CD4-positive, alpha-beta memory T cell (primary cell): ENCODE measurements at regions of chr3 and their contacts with region 1.

Region 1: DNA sequence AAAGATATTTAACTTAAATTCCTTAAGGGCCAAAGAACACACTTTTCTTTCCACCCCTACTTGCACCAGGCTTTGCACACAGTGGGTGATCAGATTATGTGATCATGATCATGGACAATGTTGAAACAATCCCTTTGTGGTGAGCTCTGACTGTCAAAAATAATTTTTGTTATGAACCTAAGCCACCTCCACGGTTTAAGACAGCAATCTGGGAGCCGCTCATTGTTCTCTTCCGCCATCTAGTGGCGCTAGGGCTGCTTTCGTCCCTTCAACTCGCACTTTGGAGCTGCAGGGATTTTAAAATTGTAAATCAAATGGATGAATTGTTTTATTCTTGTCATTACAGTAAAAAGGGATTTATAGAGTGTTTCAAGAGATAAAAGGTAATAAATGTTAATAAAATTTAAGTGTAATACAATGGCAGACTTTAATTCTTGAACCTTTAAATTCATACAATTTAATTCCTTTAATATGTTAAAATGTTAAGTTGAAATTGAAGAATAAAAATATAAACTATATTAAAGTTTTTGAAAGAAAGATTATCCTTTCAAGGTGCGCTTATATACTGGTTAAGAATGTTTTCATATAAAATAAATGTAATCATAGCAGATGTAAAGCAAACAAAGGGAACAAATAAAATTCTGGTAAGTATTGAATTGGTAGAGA is 45.3 kb upstream of the ARL6 start:
- DNase-seq: peak; percentile 49 to 61 (median 52)
- H3K4me3 ChIP-seq: no peak overlapping the region
- H3K4me3 Mint-ChIP-seq: peak overlapping the region in 4 of 8 donors; percentile 8 to 70 (median 34)
- H3K27ac ChIP-seq: no peak overlapping the region
- H3K27ac Mint-ChIP-seq: no peak overlapping the region
- H3K4me1 ChIP-seq: no peaks in the 10 kb centered on the region
- H3K4me1 Mint-ChIP-seq: no peaks in the 10 kb centered on the region
- H3K27me3 ChIP-seq: no peaks in the 10 kb centered on the region
- H3K27me3 Mint-ChIP-seq: peaks cover 1 to 7% of the 10 kb centered on the region in 2 donors

Region 2: GRCh38 chr3:97613139-97613538 is 106.2 kb before region 1 on chr3:
- CTCF ChIA-PET with region 1: no interaction called
- POLR2A ChIA-PET with region 1: no interaction called
- intact Hi-C with region 1: no loop called
- DNase-seq: no peak
- H3K4me3 ChIP-seq: no peak overlapping the region
- H3K4me3 Mint-ChIP-seq: no peak overlapping the region
- H3K27ac ChIP-seq: no peak overlapping the region
- H3K27ac Mint-ChIP-seq: no peak overlapping the region
- H3K4me1 ChIP-seq: no peaks in the 10 kb centered on the region
- H3K4me1 Mint-ChIP-seq: no peaks in the 10 kb centered on the region
- H3K27me3 ChIP-seq: no peaks in the 10 kb centered on the region
- H3K27me3 Mint-ChIP-seq: peaks cover 0 to 2% of the 10 kb centered on the region in 2 donors

Region 3: DNA sequence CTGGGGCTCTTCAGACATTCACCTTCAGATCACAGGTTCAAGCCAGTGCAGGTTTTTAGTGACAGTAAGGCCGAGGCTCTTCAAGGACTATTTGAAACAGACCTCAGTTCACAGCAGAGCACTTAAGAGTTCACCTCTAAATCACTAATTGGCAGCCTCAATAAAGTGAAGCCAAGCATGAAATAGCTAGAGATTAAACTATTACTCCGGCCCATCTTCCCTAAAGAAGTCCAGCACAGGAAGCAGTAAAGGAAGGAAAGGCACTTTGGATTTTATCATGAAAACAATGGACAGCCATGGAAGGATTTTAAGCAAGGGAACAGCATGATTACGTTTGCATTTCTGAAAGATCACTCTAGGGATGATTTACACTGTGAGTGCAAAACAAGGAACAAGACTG is 17.6 kb after region 1 on chr3:
- CTCF ChIA-PET with region 1: interaction called, 10 read pairs
- POLR2A ChIA-PET with region 1: no interaction called
- intact Hi-C with region 1: no loop called
- DNase-seq: no peak
- H3K4me3 ChIP-seq: no peak overlapping the region
- H3K4me3 Mint-ChIP-seq: no peak overlapping the region
- H3K27ac ChIP-seq: no peak overlapping the region
- H3K27ac Mint-ChIP-seq: no peak overlapping the region
- H3K4me1 ChIP-seq: no peaks in the 10 kb centered on the region
- H3K4me1 Mint-ChIP-seq: peaks cover 0 to 1% (median 0%) of the 10 kb centered on the region in 4 donors
- H3K27me3 ChIP-seq: no peaks in the 10 kb centered on the region
- H3K27me3 Mint-ChIP-seq: peaks cover 3 to 14% of the 10 kb centered on the region in 2 donors

Region 4: GRCh38 chr3:98657457-98657856 is 938.2 kb after region 1 on chr3:
- CTCF ChIA-PET with region 1: no interaction called
- POLR2A ChIA-PET with region 1: no interaction called
- intact Hi-C with region 1: no loop called
- DNase-seq: peak in 4 of 5 donors; percentile 16 to 32 (median 20)
- H3K4me3 ChIP-seq: no peak overlapping the region
- H3K4me3 Mint-ChIP-seq: peak overlapping the region in 1 of 8 donors; percentile 14
- H3K27ac ChIP-seq: no peak overlapping the region
- H3K27ac Mint-ChIP-seq: no peak overlapping the region
- H3K4me1 ChIP-seq: no peaks in the 10 kb centered on the region
- H3K4me1 Mint-ChIP-seq: peaks cover 0 to 7% (median 4%) of the 10 kb centered on the region in 4 donors
- H3K27me3 ChIP-seq: no peaks in the 10 kb centered on the region
- H3K27me3 Mint-ChIP-seq: peaks cover 14 to 16% of the 10 kb centered on the region in 2 donors